Activated B cell treated with CpG ODN at 0.5 μM for 24 hours (primary cell): ENCODE measurements at regions of chr13 and their contacts with region 1.

Region 1: GRCh38 chr13:28252547-28252946 is 114.2 kb downstream of the PAN3 start:
- DNase-seq: no peak
- ATAC-seq: no peak
- H3K4me3 Mint-ChIP-seq: no peak overlapping the region
- H3K27ac Mint-ChIP-seq: no peak overlapping the region
- H3K4me1 Mint-ChIP-seq: peaks cover 71% of the 10 kb centered on the region
- H3K27me3 Mint-ChIP-seq: no peaks in the 10 kb centered on the region
- CTCF ChIP-seq: no peak

Region 2: DNA sequence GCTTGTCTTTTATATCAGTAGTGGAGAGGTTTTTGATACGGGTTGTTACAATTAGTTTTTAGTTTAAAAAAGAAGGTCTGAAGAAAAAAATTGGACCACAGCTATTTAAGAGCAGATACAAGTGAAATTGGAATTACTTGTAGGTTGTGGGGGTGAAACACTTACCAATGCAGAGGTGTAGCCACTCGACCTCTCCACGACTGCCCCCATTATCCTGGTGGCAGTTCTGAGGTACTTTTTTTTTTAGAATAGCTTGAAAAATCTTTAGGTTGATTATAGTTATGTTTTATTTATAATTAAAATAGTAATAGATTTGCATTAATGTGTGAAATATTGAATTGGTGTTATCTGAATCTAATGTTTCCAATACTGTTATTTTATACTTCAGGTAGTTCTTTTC is 53.5 kb before region 1 on chr13:
- CTCF ChIA-PET with region 1: no interaction called
- POLR2A ChIA-PET with region 1: no interaction called
- intact Hi-C with region 1: no loop called
- DNase-seq: no peak
- ATAC-seq: no peak
- H3K4me3 Mint-ChIP-seq: no peak overlapping the region
- H3K27ac Mint-ChIP-seq: no peak overlapping the region
- H3K4me1 Mint-ChIP-seq: peaks cover 3% of the 10 kb centered on the region
- H3K27me3 Mint-ChIP-seq: no peaks in the 10 kb centered on the region
- CTCF ChIP-seq: no peak

Region 3: GRCh38 chr13:28268800-28269223 is 16.3 kb after region 1 on chr13:
- CTCF ChIA-PET with region 1: no interaction called
- POLR2A ChIA-PET with region 1: no interaction called
- intact Hi-C with region 1: loop called (anchors 2 kb)
- DNase-seq: no peak
- ATAC-seq: peak; percentile 87
- H3K4me3 Mint-ChIP-seq: peak overlapping the region; percentile 41
- H3K27ac Mint-ChIP-seq: peak overlapping the region; percentile 78
- H3K4me1 Mint-ChIP-seq: peaks cover 29% of the 10 kb centered on the region
- H3K27me3 Mint-ChIP-seq: no peaks in the 10 kb centered on the region
- CTCF ChIP-seq: no peak